K562 (cell line): ENCODE measurements at regions of chr10 and their contacts with region 1.

Region 1: GRCh38 chr10:16891375-16892313 is 74.4 kb upstream of the RSU1 start:
- DNase-seq: peak; percentile 41 to 81 (median 55)
- ATAC-seq: peak; percentile 94
- H3K4me3 ChIP-seq: peak overlapping the region; percentile 20
- H3K27ac ChIP-seq: peak overlapping the region; percentile 77
- H3K4me1 ChIP-seq: peaks cover 0 to 6% of the 10 kb centered on the region in 2 experiments; a peak in 2 of 5 replicates
- H3K27me3 ChIP-seq: 0 out of 5 replicates have a peak, but pooled peaks cover 0 to 2% of the 10 kb centered on the region in 2 experiments
- CTCF ChIP-seq: peak; percentile 65 to 83 (median 82)
- EP300 ChIP-seq: peak; percentile 50; the same call in 1 of the 2 replicates
- POLR2A ChIP-seq: peak; percentile 100
- RAD21 ChIP-seq: peak; percentile 83 to 89

Region 2: DNA sequence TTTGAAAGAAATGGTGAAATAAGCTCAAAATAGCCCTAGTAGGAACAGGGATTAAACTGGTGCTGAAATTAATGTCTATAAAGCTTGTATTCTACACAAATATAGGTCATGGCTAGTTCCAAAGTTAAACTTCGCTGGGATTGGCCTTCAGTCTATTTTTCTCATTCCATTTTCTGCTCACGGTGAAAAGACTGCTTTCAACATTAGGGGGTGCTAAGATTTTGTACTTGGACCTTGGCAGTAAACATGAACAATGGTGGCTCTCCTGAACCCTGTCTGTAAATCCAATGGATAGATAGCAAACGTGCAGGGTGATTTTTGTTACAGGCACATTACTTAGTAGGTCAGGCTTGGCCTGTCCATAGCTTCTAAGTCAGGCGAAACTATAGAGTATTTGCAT is 38.4 kb before region 1 on chr10:
- CTCF ChIA-PET with region 1: no interaction called
- POLR2A ChIA-PET with region 1: no interaction called
- in situ Hi-C with region 1: no loop called
- intact Hi-C with region 1: loop called (anchors 5 kb)
- DNase-seq: peak in 2 of 4 experiments; percentile 17 to 45
- ATAC-seq: peak; percentile 71
- H3K4me3 ChIP-seq: no peak overlapping the region
- H3K27ac ChIP-seq: no peak overlapping the region
- H3K4me1 ChIP-seq: no peaks in the 10 kb centered on the region
- H3K27me3 ChIP-seq: peaks cover 0 to 2% of the 10 kb centered on the region in 2 experiments; a peak in 2 of 5 replicates
- CTCF ChIP-seq: peak; percentile 29 to 71 (median 44); a peak in 4 of 6 replicates
- EP300 ChIP-seq: no peak
- POLR2A ChIP-seq: no peak
- RAD21 ChIP-seq: peak; percentile 74 to 79

Region 3: DNA sequence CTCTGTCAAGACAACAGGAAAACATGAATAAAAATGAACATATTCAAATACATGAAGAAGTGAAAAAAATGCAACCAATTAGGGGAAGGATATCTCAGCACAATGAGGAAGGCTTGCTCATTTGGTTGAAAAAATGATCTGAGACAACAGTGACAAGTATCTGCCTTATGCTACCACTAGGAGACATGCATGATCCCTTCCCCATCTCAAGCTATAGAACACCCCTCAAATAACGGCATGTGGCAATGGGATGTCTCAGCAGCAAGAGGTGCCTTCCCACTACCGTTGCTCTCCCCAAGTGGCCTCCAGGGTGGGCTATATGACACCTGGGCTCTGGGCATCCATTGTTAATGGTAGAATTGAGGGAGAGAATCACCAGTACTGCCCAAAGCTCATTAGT is 23.7 kb after region 1 on chr10:
- CTCF ChIA-PET with region 1: no interaction called
- POLR2A ChIA-PET with region 1: interaction called, 4 read pairs
- in situ Hi-C with region 1: no loop called
- intact Hi-C with region 1: loop called (anchors 1 kb)
- DNase-seq: peak in 1 of 4 experiments; percentile 12
- ATAC-seq: peak; percentile 53; the same call in 2 of the 3 replicates
- H3K4me3 ChIP-seq: no peak overlapping the region
- H3K27ac ChIP-seq: no peak overlapping the region
- H3K4me1 ChIP-seq: no peaks in the 10 kb centered on the region; a peak in 1 of 5 replicates
- H3K27me3 ChIP-seq: no peaks in the 10 kb centered on the region; a peak in 1 of 5 replicates
- CTCF ChIP-seq: peak; percentile 8 to 23 (median 16); a peak in 1 of 6 replicates
- EP300 ChIP-seq: no peak
- POLR2A ChIP-seq: no peak
- RAD21 ChIP-seq: 0 out of 4 replicates have a peak, but pooled peaks of 1 of the 2 experiments have one; percentile 15